Posterior vena cava (tissue), 2 donors: ENCODE measurements at regions of chr9 and their contacts with region 1.

Region 1: GRCh38 chr9:104968025-104968982 is 40.3 kb upstream of the ABCA1 start:
- DNase-seq: peak; percentile 96

Region 2: GRCh38 chr9:104575456-104575855 is 392.8 kb before region 1 on chr9:
- intact Hi-C with region 1: no loop called
- DNase-seq: no peak

Region 3: GRCh38 chr9:104836235-104836634 is 132.1 kb before region 1 on chr9:
- intact Hi-C with region 1: no loop called
- DNase-seq: no peak

Region 4: GRCh38 chr9:104923740-104924139 is 44.6 kb before region 1 on chr9:
- intact Hi-C with region 1: no loop called
- DNase-seq: no peak

Region 5: DNA sequence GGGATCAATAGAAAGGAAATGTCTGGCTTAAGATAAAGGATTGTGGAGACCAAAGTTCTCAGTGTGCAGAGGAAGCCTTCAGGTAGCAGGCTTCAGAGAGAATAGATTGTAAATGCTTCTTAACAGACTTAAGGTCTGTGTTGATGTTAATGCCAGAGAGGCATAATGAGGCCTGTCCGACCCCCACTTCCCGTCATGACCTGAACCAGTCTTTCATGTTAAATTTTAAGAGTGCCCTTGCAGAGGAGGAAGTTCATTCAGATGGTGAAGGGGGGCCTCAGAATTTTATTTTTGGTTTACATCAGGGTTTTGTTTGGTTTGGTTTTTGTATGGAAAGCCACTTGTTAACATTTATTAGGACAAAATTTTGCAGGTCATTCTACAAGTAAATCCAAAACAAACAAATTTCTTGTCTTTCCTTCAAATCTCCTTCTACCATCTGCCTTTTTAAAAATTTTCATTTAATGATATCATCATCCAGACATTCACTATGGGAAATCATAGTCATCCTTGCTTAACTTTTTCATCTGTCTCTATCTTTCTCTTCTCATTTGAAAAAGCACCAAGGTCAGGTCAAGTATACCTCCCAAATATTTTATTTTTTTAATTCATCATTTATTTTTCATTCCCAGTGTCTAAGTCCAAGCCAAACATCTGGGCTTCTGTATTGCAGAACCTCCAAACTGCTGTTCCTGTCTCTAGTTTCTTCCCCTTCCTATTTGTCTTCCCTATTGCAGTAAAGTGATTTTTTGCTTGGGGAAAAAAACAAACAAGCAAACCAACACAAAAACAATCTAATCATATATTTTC is 33.4 kb before region 1 on chr9:
- intact Hi-C with region 1: loop called in 1 of 2 experiments (anchors 5 kb)
- DNase-seq: no peak